ENCODE measurements at regions of chr12 and their contacts with region 1.

Region 1: GRCh38 chr12:98572010-98572409 is 21.5 kb upstream of the SLC25A3 start:
- DNase-seq: no peak
- ATAC-seq: no peak
- H3K4me3 ChIP-seq: no peak overlapping the region
- H3K27ac ChIP-seq: no peak overlapping the region
- H3K4me1 ChIP-seq: peaks cover 0 to 3% (median 0%) of the 10 kb centered on the region in 12 donors
- H3K27me3 ChIP-seq: no peaks in the 10 kb centered on the region
- CTCF ChIP-seq: peak in 3 of 12 donors; percentile 10 to 19 (median 16)
- POLR2A ChIP-seq: no peak

Region 2: DNA sequence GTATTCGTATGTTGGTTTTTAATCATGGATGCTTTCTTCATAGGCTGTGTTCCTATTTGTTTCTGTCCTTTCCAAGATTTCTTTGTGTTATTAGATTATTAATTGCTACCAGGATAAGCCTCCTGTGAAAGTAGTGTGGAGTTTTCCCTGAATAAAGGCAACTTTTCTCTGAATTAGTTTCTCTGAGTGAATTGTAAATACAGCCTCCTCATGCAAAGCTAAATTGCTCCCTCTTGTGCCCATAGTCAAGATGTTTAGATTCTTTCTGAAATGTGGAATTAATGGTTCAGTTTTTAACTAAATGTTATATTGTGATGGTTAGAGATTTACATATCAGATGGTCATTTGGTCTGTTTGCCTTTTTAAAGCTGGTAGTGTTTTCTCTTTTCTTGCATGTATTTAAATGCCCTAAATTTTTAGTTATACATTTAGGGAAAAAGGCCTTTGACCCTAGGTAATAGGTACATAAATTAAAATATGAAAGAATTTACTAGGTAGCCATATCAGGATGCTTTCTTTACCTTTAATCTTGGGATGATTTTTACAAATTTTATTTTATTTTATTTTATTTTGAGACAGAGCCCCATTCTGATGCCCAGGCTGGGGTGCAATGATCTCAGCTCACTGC is 82.0 kb after region 1 on chr12:
- intact Hi-C with region 1: loop called in 9 of 10 experiments (anchors 2 to 5 kb)
- DNase-seq: no peak
- ATAC-seq: no peak
- H3K4me3 ChIP-seq: no peak overlapping the region
- H3K27ac ChIP-seq: no peak overlapping the region
- H3K4me1 ChIP-seq: no peaks in the 10 kb centered on the region
- H3K27me3 ChIP-seq: no peaks in the 10 kb centered on the region
- CTCF ChIP-seq: peak; percentile 42 to 72 (median 57)
- POLR2A ChIP-seq: no peak